PC-9 (cell line): ENCODE measurements at regions of chr19 and their contacts with region 1.

Region 1: GRCh38 chr19:5775668-5776309 is 8.8 kb downstream of the PRR22 start:
- DNase-seq: peak in 1 of 2 experiments; percentile 36
- H3K4me3 ChIP-seq: no peak overlapping the region
- H3K27ac ChIP-seq: no peak overlapping the region
- H3K4me1 ChIP-seq: no peaks in the 10 kb centered on the region
- H3K27me3 ChIP-seq: no peaks in the 10 kb centered on the region
- CTCF ChIP-seq: no peak

Region 2: GRCh38 chr19:5809053-5809452 is 33.3 kb after region 1 on chr19:
- CTCF ChIA-PET with region 1: interaction called, 14 read pairs
- POLR2A ChIA-PET with region 1: no interaction called
- intact Hi-C with region 1: no loop called
- DNase-seq: no peak
- H3K4me3 ChIP-seq: no peak overlapping the region
- H3K27ac ChIP-seq: peak overlapping the region; percentile 34; the same call in 1 of the 2 replicates
- H3K4me1 ChIP-seq: no peaks in the 10 kb centered on the region
- H3K27me3 ChIP-seq: 0 out of 2 replicates have a peak, but pooled peaks cover 8% of the 10 kb centered on the region
- CTCF ChIP-seq: no peak

Region 3: GRCh38 chr19:5864725-5865486 is 89.1 kb after region 1 on chr19:
- CTCF ChIA-PET with region 1: interaction called, 20 read pairs
- POLR2A ChIA-PET with region 1: no interaction called
- intact Hi-C with region 1: no loop called
- DNase-seq: no peak
- H3K4me3 ChIP-seq: no peak overlapping the region
- H3K27ac ChIP-seq: no peak overlapping the region
- H3K4me1 ChIP-seq: no peaks in the 10 kb centered on the region
- H3K27me3 ChIP-seq: no peaks in the 10 kb centered on the region
- CTCF ChIP-seq: no peak; the same call in 1 of the 2 replicates

Region 4: GRCh38 chr19:6048808-6049405 is 273.1 kb after region 1 on chr19:
- CTCF ChIA-PET with region 1: no interaction called
- POLR2A ChIA-PET with region 1: no interaction called
- intact Hi-C with region 1: loop called (anchors 10 kb)
- DNase-seq: peak; percentile 57 to 64
- H3K4me3 ChIP-seq: no peak overlapping the region
- H3K27ac ChIP-seq: no peak overlapping the region
- H3K4me1 ChIP-seq: peaks cover 4% of the 10 kb centered on the region; the same call in 1 of the 2 replicates
- H3K27me3 ChIP-seq: no peaks in the 10 kb centered on the region
- CTCF ChIP-seq: peak; percentile 78